ENCODE measurements at regions of chr22 and their contacts with region 1.

Region 1: DNA sequence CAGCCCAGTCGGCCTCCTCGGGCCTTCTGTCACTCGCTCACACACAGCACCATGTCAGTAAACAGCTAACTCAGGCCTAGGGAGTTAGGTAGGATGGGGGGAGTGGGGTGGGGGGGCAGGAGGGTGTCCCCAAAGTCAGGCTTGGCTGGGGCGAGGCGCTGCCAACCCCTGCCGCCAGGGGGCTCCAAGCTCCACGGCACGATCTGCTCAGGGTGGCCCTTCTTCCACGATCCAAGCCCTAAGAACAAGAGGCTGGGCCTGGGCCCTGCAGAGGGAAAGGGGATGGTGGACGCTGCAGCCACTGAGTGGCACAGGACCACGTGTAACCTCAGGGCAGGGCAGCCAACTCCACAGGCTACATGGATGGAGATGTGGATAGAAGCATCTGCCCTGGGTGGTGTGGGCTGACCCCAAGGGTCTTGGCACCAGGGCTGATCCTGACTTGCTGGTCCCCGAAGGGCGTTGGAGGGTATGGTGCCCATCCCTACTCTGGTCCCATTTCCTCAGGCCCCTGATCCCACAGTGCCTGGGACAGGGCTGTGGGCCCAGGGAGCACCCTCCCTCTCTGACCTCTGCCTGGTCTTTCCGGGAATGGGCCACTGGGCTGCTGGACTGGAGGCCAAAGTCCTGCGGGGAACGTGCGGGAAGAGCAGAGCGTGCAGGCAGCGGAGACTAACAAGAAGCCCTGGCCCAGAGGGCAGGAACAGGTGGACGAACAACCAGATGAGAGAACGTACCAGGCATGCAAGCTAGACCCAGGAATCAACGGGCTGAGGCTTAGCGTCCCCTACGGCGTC is 29.1 kb upstream of the TXNRD2 start:
- DNase-seq: peak; percentile 42
- H3K4me3 ChIP-seq: no peak overlapping the region
- H3K27ac ChIP-seq: peak overlapping the region in 1 of 2 donors; percentile 23
- H3K4me1 ChIP-seq: no peaks in the 10 kb centered on the region
- H3K27me3 ChIP-seq: no peaks in the 10 kb centered on the region
- CTCF ChIP-seq: peak; percentile 83 to 97 (median 88)
- POLR2A ChIP-seq: no peak

Region 2: DNA sequence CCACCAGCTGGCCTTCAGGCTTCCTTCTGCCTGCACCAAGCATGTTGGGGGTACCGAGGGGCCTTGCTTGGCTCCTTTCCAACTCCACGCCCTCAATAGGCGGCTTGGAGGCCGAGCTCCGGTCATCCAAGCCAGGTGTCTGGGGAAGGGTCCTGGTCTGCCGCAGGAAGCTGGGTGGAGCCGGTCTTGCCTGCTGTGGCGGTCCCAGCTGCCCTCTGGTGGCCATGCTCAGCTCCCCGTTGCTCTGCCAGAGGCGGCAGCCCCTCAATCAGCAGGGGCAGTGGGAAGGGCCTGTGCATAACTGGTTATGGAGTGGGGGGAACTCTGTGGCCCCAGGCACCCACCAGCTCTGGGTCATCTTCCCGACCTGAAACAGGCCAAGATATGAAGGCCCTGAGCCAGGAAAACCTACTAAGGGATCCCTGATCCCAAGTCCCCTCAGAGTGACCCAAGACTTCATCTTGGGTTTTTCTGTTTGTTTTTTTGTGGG is 42.8 kb after region 1 on chr22:
- intact Hi-C with region 1: loop called (anchors 1 kb)
- DNase-seq: no peak
- H3K4me3 ChIP-seq: no peak overlapping the region
- H3K27ac ChIP-seq: no peak overlapping the region
- H3K4me1 ChIP-seq: no peaks in the 10 kb centered on the region
- H3K27me3 ChIP-seq: no peaks in the 10 kb centered on the region
- CTCF ChIP-seq: peak; percentile 57 to 81 (median 77)
- POLR2A ChIP-seq: no peak

Region 3: DNA sequence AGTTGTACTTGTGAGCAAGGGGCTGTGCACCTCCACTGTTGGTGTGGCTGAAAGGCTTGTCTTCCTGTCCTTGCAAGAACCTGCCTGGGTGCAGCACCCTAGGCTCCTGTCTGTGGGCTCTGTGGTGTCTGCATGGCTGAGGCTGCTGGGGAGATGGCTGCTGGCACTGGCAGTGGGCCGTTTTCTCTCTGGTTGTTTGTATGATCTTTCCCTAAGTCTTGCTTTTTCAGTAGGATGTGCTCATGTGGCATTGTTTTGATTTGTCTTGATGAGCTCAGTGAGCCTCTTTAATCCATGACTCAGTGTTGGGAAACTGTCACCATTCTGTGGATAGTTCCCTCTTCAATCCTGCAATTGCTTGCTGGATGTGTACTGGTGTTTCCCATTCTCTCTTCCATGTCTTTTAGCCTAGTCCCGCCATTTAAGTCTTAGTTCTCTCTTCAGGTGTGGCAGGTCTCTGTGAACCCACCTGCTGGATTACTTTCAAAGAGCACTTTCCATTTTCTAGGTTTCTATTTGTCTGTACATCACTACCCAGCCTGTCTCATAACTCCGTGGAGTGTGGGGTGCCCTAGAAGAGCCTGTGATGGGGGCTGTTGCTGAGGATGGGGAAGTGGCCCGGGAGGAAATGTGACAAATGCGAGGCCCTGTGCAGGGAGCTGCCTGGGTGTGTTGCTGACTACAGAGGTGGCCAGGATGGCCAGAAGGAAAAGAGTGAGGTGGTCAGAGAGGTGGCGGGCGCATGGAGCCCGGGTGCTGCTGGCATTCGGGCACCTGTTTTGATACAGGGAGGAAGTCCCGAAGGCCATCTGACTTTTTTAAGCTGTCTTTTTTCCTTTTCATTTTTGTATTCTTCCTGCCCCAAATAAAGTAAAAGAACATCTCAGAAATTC is 119.9 kb after region 1 on chr22:
- intact Hi-C with region 1: no loop called
- DNase-seq: no peak
- H3K4me3 ChIP-seq: no peak overlapping the region
- H3K27ac ChIP-seq: no peak overlapping the region
- H3K4me1 ChIP-seq: no peaks in the 10 kb centered on the region
- H3K27me3 ChIP-seq: no peaks in the 10 kb centered on the region
- CTCF ChIP-seq: no peak
- POLR2A ChIP-seq: no peak

Measured in prostate gland (tissue), 2 donors.